HCT116 (cell line): ENCODE measurements at regions of chr4 and their contacts with region 1.

Region 1: DNA sequence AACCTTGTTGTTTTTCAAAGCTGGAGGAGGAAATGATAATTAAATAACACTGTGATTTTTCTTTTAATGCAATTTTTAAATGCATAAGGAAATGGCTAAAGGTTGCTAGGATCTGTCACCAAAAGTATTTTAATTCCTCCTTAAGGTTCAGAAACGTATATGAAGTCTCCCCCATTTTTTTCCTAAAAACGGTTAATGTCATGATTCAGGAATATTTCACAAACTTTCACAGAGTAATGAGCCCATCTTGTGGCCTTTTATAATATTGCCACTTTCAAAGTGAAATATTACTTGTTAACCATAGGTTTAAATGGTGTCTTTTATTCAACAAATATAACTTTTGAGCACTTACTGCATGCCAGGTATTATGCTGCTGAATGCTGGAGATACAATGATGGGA is 99.5 kb upstream of the USP38 start:
- DNase-seq: no peak
- ATAC-seq: no peak; the same call in 1 of the 2 replicates
- H3K4me3 ChIP-seq: no peak overlapping the region
- H3K27ac ChIP-seq: no peak overlapping the region
- H3K4me1 ChIP-seq: no peaks in the 10 kb centered on the region
- H3K27me3 ChIP-seq: no peaks in the 10 kb centered on the region
- CTCF ChIP-seq: peak; percentile 11 to 33 (median 29); a peak in 3 of 6 replicates
- POLR2A ChIP-seq: no peak
- RAD21 ChIP-seq: peak; percentile 62

Region 2: GRCh38 chr4:141158219-141158618 is 1927.0 kb before region 1 on chr4:
- CTCF ChIA-PET with region 1: no interaction called
- POLR2A ChIA-PET with region 1: no interaction called
- RAD21 ChIA-PET with region 1: no interaction called
- intact Hi-C with region 1: loop called (anchors 10 kb)
- DNase-seq: peak; percentile 33
- ATAC-seq: no peak
- H3K4me3 ChIP-seq: no peak overlapping the region
- H3K27ac ChIP-seq: no peak overlapping the region
- H3K4me1 ChIP-seq: no peaks in the 10 kb centered on the region
- H3K27me3 ChIP-seq: no peaks in the 10 kb centered on the region
- CTCF ChIP-seq: peak; percentile 23 to 67 (median 43); a peak in 4 of 6 replicates
- POLR2A ChIP-seq: no peak
- RAD21 ChIP-seq: peak; percentile 71

Region 3: GRCh38 chr4:141307241-141307689 is 1778.0 kb before region 1 on chr4:
- CTCF ChIA-PET with region 1: no interaction called
- POLR2A ChIA-PET with region 1: no interaction called
- RAD21 ChIA-PET with region 1: no interaction called
- intact Hi-C with region 1: loop called (anchors 5 kb)
- DNase-seq: peak; percentile 45
- ATAC-seq: peak; percentile 99
- H3K4me3 ChIP-seq: no peak overlapping the region
- H3K27ac ChIP-seq: no peak overlapping the region
- H3K4me1 ChIP-seq: no peaks in the 10 kb centered on the region
- H3K27me3 ChIP-seq: no peaks in the 10 kb centered on the region
- CTCF ChIP-seq: peak; percentile 52 to 67 (median 53); a peak in 5 of 6 replicates
- POLR2A ChIP-seq: no peak
- RAD21 ChIP-seq: peak; percentile 84

Region 4: DNA sequence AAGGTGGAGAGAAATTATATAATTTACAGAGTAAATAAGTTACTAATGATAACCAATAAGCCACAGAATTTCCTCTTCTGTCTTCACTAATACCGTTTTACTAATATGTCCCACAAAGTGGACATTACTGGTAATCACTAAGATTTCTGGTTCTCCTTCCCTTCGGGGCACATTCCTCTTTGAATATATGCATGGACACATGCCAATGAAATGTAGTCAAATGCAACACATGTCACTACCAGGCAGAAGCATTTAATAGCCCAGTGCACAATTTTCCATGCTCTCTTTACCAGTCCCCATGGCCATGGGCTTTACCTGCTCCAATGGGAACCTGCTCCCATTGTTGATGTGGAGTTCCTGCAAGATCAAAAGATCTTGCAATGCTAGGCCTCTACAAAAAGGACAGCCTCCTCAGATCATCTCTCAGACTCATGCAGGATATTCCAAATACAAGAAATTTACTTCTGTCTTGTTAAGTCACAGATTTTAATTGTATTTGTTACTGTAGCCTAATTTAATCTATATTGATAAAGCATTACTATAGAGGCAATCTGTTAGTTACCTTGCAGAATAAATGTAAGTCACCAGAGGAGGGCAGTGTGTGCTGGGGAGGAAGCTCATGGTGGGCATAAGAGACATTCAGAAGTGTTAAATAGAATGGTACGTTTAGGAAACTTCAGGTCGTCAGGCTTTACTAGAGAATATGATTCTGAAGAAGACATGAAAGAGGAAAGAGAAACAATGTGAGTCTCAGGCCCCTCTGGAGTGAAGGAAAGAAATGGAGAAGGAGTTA is 202.0 kb before region 1 on chr4:
- CTCF ChIA-PET with region 1: no interaction called
- POLR2A ChIA-PET with region 1: no interaction called
- RAD21 ChIA-PET with region 1: no interaction called
- intact Hi-C with region 1: loop called (anchors 10 kb)
- DNase-seq: peak; percentile 12
- ATAC-seq: peak; percentile 72
- H3K4me3 ChIP-seq: no peak overlapping the region
- H3K27ac ChIP-seq: no peak overlapping the region
- H3K4me1 ChIP-seq: no peaks in the 10 kb centered on the region
- H3K27me3 ChIP-seq: no peaks in the 10 kb centered on the region
- CTCF ChIP-seq: peak; percentile 15 to 56 (median 39); a peak in 5 of 6 replicates
- POLR2A ChIP-seq: no peak
- RAD21 ChIP-seq: peak; percentile 53

Region 5: GRCh38 chr4:142984871-142985585 is 100.2 kb before region 1 on chr4:
- CTCF ChIA-PET with region 1: interaction called, 22 read pairs
- POLR2A ChIA-PET with region 1: no interaction called
- RAD21 ChIA-PET with region 1: interaction called in 1 of 2 experiments, 3 read pairs
- intact Hi-C with region 1: loop called (anchors 2 kb)
- DNase-seq: peak; percentile 40
- ATAC-seq: peak; percentile 96
- H3K4me3 ChIP-seq: no peak overlapping the region
- H3K27ac ChIP-seq: no peak overlapping the region
- H3K4me1 ChIP-seq: no peaks in the 10 kb centered on the region
- H3K27me3 ChIP-seq: no peaks in the 10 kb centered on the region
- CTCF ChIP-seq: peak; percentile 57 to 66 (median 62); a peak in 5 of 6 replicates
- POLR2A ChIP-seq: no peak
- RAD21 ChIP-seq: peak; percentile 66

Region 6: GRCh38 chr4:143358923-143359643 is 273.9 kb after region 1 on chr4:
- CTCF ChIA-PET with region 1: no interaction called
- POLR2A ChIA-PET with region 1: no interaction called
- RAD21 ChIA-PET with region 1: no interaction called
- intact Hi-C with region 1: no loop called
- DNase-seq: no peak
- ATAC-seq: no peak
- H3K4me3 ChIP-seq: no peak overlapping the region
- H3K27ac ChIP-seq: no peak overlapping the region
- H3K4me1 ChIP-seq: no peaks in the 10 kb centered on the region; a peak in 1 of 4 replicates
- H3K27me3 ChIP-seq: no peaks in the 10 kb centered on the region
- CTCF ChIP-seq: no peak
- POLR2A ChIP-seq: no peak
- RAD21 ChIP-seq: no peak